Right ventricle myocardium inferior (tissue), 1 donor: ENCODE measurements at regions of chrX and their contacts with region 1.

Region 1: DNA sequence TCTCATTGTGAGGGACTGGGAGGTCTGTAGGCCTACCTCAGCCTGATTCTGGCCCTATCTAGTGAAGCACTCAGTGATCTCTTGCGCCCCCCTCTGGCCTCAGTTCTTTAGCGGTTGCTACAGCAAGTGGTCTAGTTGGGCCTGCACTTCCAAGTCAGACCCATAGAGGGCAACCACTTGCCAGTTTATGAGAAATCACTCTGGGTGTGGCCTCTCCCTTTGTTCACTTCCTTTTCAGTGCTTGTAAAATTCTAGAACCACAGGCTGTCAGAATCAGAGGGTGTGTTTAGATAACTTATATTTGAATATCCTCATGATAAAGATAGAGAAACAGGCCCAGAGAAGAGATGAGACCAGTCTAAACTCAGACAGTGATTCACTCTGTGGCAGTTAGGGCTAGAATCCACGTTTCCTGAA is 60.9 kb upstream of the LAS1L start:
- DNase-seq: peak; percentile 93
- ATAC-seq: peak; percentile 94

Region 2: DNA sequence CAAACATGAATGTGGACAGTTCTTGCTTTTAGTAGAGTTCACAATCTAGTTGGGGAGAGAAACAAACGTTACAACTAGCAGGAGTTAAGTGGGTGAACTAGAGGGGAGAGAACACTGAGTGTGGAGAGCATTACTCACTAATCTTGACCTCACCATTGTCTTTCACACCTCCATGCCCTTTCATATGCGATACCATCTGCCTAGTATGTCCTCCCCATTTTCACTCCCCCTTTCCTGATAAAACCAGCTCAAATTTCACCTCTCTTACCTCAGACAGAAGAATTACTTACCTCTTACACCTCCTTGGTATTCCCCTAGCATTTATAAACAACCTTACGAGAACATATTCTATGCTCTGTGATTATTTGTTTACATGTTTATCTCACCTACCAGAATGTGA is 114.5 kb before region 1 on chrX:
- intact Hi-C with region 1: no loop called
- DNase-seq: no peak
- ATAC-seq: no peak

Region 3: GRCh38 chrX:65667503-65668376 is 72.3 kb after region 1 on chrX and contains the start of gene MSN:
- intact Hi-C with region 1: loop called (anchors 5 kb)
- DNase-seq: peak; percentile 91
- ATAC-seq: peak; percentile 93
- total RNA-seq, gene MSN: 131 TPM